Calu3 (cell line): ENCODE measurements at regions of chr5 and their contacts with region 1.

Region 1: GRCh38 chr5:76601470-76601869 is 21.7 kb downstream of the F2RL2 start:
- DNase-seq: peak; percentile 57
- H3K4me3 Mint-ChIP-seq: no peak overlapping the region
- H3K27ac Mint-ChIP-seq: no peak overlapping the region
- H3K4me1 Mint-ChIP-seq: peaks cover 19% of the 10 kb centered on the region
- H3K27me3 Mint-ChIP-seq: no peaks in the 10 kb centered on the region
- CTCF ChIP-seq: peak; percentile 64

Region 2: GRCh38 chr5:76513486-76513885 is 88.0 kb before region 1 on chr5:
- CTCF ChIA-PET with region 1: no interaction called
- intact Hi-C with region 1: no loop called
- DNase-seq: no peak
- H3K4me3 Mint-ChIP-seq: no peak overlapping the region
- H3K27ac Mint-ChIP-seq: no peak overlapping the region
- H3K4me1 Mint-ChIP-seq: no peaks in the 10 kb centered on the region
- H3K27me3 Mint-ChIP-seq: peaks cover 17% of the 10 kb centered on the region
- CTCF ChIP-seq: no peak

Region 3: DNA sequence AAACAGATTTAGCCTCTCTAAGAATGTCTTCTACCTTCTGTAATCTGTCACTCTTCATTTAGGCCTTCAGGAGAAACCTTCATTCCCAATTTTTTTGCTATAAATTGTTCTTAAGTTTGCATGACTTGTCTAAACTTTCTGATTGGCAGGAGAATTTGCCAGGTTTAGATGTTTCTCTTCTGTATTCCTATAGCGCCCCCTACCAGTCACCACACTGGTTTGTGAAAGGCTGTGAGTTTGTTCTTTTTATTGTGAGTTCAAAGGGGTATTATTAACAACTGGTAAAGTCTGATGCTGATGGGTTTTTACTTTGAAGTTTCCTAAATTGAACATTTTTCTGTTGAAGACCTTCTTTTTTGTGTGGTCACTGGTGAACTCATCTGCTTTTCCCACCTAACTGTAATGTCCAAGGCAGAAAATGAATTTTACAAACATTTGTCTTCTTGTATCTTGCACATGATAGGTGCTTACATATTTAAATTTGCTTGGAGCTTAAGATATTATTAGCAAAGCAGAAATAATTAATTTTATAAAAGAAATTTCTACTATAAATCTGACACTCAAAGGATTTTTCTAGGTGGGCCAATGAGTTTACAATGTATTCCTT is 40.1 kb after region 1 on chr5:
- CTCF ChIA-PET with region 1: interaction called, 3 read pairs
- intact Hi-C with region 1: loop called (anchors 1 kb)
- DNase-seq: peak; percentile 72
- H3K4me3 Mint-ChIP-seq: no peak overlapping the region
- H3K27ac Mint-ChIP-seq: no peak overlapping the region
- H3K4me1 Mint-ChIP-seq: no peaks in the 10 kb centered on the region
- H3K27me3 Mint-ChIP-seq: no peaks in the 10 kb centered on the region
- CTCF ChIP-seq: peak; percentile 61

Region 4: GRCh38 chr5:77015938-77016569 is 414.6 kb after region 1 on chr5:
- CTCF ChIA-PET with region 1: interaction called, 10 read pairs
- intact Hi-C with region 1: loop called (anchors 2 kb)
- DNase-seq: no peak
- H3K4me3 Mint-ChIP-seq: no peak overlapping the region
- H3K27ac Mint-ChIP-seq: no peak overlapping the region
- H3K4me1 Mint-ChIP-seq: no peaks in the 10 kb centered on the region
- H3K27me3 Mint-ChIP-seq: no peaks in the 10 kb centered on the region
- CTCF ChIP-seq: peak; percentile 50